Tibial artery (tissue), 4 donors: ENCODE measurements at regions of chr2 and their contacts with region 1.

Region 1: GRCh38 chr2:43226558-43226954 is at the start of gene ZFP36L2:
- DNase-seq: peak; percentile 93 to 98
- H3K4me3 ChIP-seq: peak within 1 kb of the TSS; percentile 87 to 89
- H3K27ac ChIP-seq: peak within 1 kb of the TSS; percentile 96 to 99
- H3K4me1 ChIP-seq: peaks cover 0 to 38% (median 23%) of the 10 kb centered on the region in 4 donors
- H3K27me3 ChIP-seq: no peaks in the 10 kb centered on the region
- CTCF ChIP-seq: no peak

Region 2: DNA sequence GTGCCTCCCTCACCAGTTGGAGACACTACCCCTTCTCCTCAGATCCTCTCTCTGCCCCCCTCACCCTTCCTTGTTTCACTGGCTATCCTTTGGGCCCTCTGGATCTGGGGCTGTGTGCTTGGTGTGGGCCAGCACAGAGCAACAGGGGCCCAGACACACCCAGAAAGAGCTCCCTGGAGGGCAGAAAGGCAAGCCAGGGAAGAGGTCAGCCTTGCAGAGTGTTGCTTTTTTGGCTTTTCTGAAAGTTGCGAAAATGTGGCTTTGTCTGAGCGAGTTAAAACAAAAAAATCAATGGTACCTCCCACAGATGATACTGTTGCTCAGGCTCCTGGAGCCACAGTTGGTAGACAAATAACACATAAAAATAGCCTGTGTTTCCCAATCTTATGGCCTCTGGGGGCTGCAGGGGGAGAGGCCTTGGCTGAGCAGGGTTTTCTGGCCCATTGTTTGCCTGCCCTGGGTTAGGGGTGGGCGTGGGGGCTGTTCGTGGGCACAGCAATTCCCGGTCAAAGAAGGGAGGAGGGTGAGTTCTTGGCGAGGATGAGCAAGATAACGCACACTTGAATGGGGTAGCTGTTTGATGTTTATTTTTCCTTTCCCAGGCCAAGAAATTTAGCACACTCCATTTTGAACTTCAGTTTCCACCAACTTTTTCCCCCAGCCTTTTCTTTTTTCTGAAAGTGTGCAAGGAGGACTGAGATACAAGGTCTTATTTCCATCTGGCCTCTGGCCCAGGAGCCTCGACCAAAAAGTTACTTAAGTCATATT is 267.1 kb before region 1 on chr2:
- intact Hi-C with region 1: loop called (anchors 5 kb)
- DNase-seq: peak; percentile 83 to 87
- H3K4me3 ChIP-seq: no peak overlapping the region
- H3K27ac ChIP-seq: peak overlapping the region; percentile 84 to 88
- H3K4me1 ChIP-seq: peaks cover 0 to 77% (median 60%) of the 10 kb centered on the region in 4 donors
- H3K27me3 ChIP-seq: no peaks in the 10 kb centered on the region
- CTCF ChIP-seq: no peak

Region 3: GRCh38 chr2:43024515-43025011 is 202.0 kb before region 1 on chr2:
- intact Hi-C with region 1: loop called (anchors 5 kb)
- DNase-seq: peak; percentile 48 to 77
- H3K4me3 ChIP-seq: no peak overlapping the region
- H3K27ac ChIP-seq: no peak overlapping the region
- H3K4me1 ChIP-seq: peaks cover 0 to 14% (median 4%) of the 10 kb centered on the region in 4 donors
- H3K27me3 ChIP-seq: no peaks in the 10 kb centered on the region
- CTCF ChIP-seq: peak; percentile 79 to 84

Region 4: GRCh38 chr2:43484323-43484930 is 257.9 kb after region 1 on chr2:
- intact Hi-C with region 1: loop called (anchors 5 kb)
- DNase-seq: no peak
- H3K4me3 ChIP-seq: no peak overlapping the region
- H3K27ac ChIP-seq: peak overlapping the region; percentile 65 to 80
- H3K4me1 ChIP-seq: peaks cover 0 to 70% (median 30%) of the 10 kb centered on the region in 4 donors
- H3K27me3 ChIP-seq: no peaks in the 10 kb centered on the region
- CTCF ChIP-seq: peak; percentile 68 to 84